ENCODE measurements at regions of chr2 and their contacts with region 1.

Region 1: GRCh38 chr2:169109502-169110409 is 40.4 kb downstream of the DHRS9 start:
- DNase-seq: peak; percentile 64
- CTCF ChIP-seq: peak; percentile 73

Region 2: GRCh38 chr2:168849610-168850009 is 260.1 kb before region 1 on chr2:
- CTCF ChIA-PET with region 1: no interaction called
- POLR2A ChIA-PET with region 1: no interaction called
- DNase-seq: no peak
- CTCF ChIP-seq: no peak

Region 3: GRCh38 chr2:169082995-169083394 is 26.8 kb before region 1 on chr2:
- CTCF ChIA-PET with region 1: interaction called, 25 read pairs
- POLR2A ChIA-PET with region 1: no interaction called
- DNase-seq: peak; percentile 27
- CTCF ChIP-seq: no peak

Region 4: DNA sequence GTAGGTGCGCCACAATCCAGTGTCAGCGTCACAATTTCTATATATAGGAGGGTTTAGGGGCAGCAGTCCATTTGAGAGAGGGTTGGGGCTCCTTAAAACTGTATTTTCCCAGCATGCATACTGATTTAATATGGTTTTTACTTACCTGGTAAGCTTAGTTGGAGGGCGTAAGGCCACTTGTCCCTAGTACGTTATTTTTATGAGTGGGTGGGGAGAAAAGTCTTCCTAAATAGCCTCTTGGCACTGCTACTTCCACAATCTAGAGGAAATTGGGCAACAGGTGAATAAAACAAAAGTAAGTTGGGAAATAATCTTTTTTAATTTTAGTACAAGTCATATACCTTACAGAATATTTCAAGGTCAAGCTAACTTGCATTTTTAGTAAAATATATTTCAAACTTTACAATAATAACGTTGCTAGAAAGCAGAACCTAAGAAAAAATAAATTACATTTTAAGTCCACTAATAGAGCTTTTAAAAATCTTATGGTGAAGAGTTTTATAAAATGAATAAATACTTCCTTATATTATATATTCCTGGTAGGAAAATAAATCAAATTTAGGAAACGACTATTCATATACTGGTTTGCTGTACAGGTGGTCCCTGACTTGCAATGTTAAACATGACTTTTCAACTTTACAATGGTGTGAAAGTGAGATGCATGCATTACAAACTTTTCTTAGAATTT is 19.5 kb before region 1 on chr2:
- CTCF ChIA-PET with region 1: interaction called, 25 read pairs
- POLR2A ChIA-PET with region 1: no interaction called
- DNase-seq: no peak
- CTCF ChIP-seq: no peak

Region 5: DNA sequence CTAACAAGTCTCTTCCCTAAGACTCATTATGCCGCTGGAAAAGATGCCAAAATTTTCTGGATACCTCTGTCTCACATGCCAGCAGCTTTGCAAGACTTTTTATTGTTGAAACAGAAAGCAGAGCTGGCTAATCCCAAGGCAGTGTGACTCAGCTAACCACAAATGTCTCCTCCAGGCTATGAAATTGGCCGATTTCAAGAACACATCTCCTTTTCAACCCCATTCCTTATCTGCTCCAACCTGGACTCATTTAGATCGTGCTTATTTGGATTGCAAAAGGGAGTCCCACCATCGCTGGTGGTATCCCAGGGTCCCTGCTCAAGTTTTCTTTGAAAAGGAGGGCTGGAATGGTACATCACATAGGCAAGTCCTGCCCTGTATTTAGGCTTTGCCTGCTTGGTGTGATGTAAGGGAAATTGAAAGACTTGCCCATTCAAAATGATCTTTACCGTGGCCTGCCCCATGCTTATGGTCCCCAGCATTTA is 14.1 kb before region 1 on chr2:
- CTCF ChIA-PET with region 1: interaction called, 53 read pairs
- POLR2A ChIA-PET with region 1: no interaction called
- DNase-seq: no peak
- CTCF ChIP-seq: no peak

Region 6: GRCh38 chr2:169131587-169132512 is 22.1 kb after region 1 on chr2:
- CTCF ChIA-PET with region 1: interaction called, 60 read pairs
- POLR2A ChIA-PET with region 1: no interaction called
- DNase-seq: peak; percentile 60
- CTCF ChIP-seq: peak; percentile 78

Region 7: DNA sequence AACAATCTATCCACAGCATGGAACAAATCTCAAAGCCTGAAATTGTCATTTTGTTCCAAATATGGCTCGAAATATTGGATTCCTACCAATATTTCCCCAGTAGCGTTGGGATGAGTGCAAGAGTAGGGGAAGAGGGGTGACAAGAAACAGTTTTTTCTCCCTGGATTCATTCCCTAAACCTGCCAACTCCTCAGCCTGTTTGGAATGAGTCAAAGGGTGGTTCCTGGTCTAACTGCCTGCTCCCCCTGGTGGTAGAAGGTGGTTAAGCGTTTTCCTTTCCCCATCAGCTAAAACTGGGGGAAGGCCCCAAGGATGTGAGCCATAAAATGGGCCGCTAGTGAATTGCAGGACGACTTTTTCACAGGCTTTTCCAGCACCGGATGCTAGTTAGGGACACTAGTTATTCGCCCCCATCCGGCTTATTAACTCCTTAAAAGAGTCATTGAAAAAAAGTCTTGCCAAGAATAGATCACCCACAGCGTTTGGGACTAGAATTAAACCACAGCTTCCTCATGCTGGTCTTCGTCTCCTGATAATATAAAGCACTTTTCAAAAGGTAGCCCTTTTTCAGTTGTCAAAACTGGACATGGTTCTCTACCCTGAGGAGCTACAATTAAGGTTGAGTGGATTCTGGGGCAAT is 32.1 kb after region 1 on chr2:
- CTCF ChIA-PET with region 1: interaction called, 69 read pairs
- POLR2A ChIA-PET with region 1: no interaction called
- DNase-seq: peak; percentile 52
- CTCF ChIP-seq: peak; percentile 87